Activated CD4-positive, alpha-beta T cell treated with anti-CD3 and anti-CD28 coated beads for 36 hours (primary cell): ENCODE measurements at regions of chr3 and their contacts with region 1.

Region 1: DNA sequence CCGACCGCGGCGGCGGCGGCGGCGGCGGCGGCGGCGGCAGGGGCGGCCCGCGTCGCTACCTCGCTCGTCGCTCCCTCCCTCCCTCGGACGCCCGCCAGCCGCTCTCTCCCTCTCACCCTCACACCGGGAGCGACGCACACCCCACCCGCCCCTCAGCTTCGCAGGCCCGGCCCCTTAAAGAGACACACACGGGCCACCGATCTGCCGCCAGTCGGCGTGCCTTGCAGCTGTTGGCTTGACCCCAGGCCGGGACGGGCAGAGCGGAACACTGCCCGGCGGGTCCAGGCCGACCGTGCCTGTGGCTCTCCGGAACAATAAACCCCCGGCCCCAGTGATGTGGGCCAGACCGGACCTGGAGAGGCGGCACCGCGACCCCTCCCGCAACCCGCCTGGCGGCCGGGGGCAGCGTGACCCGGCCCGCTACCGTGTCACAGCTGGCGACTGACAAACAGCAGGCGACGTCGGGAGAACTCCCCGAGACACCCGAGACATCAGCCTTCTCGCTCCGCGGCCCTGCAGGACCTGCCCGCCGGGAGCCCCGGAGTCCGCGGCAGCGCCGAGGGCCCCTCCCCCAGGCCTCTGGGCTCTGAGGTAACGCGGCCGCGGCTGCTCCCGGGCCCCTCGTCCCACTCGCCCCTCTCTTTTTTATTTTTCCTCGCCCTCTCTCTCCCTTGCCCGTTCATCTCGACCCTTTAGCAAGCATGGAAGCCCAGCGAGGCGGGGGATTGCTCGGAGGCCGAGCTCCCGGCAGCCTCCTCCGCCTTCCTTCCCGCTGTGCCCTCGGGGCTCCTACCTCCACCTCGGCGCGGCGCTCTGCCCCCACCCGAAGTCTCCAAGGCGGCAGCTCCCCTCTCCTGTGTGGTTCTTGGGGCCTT is at the start of gene SETD2:
- DNase-seq: peak; percentile 94
- ATAC-seq: peak; percentile 86
- H3K4me3 Mint-ChIP-seq: peak within 1 kb of the TSS; percentile 97
- H3K27ac Mint-ChIP-seq: peak within 1 kb of the TSS; percentile 99
- H3K4me1 Mint-ChIP-seq: peaks cover 40% of the 10 kb centered on the region
- H3K27me3 Mint-ChIP-seq: no peaks in the 10 kb centered on the region
- total RNA-seq, gene SETD2: 31.8 to 35.8 TPM

Region 2: DNA sequence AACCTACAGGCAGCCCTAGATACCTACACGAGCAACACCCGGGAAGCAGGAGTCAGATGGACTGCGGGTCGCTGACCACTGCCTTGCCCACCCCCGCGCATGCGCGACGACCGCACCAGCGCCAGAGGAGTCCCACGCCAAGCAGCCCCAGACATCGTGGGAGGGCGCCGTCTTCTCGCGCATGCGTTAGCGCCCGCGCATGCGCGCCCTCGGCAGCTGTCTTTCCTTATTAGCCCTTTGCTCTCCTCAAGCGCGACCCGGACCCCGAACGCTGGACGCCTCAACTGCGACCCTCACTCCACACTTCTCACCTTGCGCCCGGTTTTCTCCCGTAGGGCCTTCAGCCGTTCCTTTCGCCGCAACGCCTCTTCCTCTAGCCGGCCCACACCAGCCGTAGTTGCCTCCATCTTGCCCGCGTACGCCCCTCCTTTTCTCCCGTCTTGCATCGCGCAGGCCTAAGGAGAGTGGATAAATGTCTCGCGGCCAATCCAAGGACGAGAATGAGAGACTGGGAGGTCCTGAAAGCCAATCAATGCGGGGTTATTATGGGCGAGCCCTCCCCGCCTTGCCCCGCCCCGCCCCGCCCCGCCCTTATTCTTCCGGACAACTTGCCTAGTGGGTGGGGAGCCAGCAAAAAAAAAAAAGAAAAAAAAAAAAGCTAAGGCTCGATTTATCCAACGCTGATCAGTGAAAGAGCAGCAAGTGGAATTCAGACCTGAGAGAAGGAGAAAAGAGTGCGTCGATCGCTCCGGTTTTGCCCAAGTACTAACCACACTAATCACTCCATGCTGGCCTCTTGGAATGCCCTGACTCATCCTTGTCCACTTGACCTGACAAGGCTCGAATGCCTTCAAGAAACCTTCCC is 187.7 kb before region 1 on chr3 and contains the start of gene CCDC12:
- CTCF ChIA-PET with region 1: no interaction called
- POLR2A ChIA-PET with region 1: no interaction called
- intact Hi-C with region 1: loop called in 1 of 2 experiments (anchors 1 kb)
- DNase-seq: peak; percentile 96
- ATAC-seq: peak; percentile 82
- H3K4me3 Mint-ChIP-seq: peak within 1 kb of the TSS; percentile 92
- H3K27ac Mint-ChIP-seq: peak within 1 kb of the TSS; percentile 99
- H3K4me1 Mint-ChIP-seq: peaks cover 66% of the 10 kb centered on the region
- H3K27me3 Mint-ChIP-seq: no peaks in the 10 kb centered on the region
- total RNA-seq, gene CCDC12: 45.4 to 47.8 TPM

Region 3: DNA sequence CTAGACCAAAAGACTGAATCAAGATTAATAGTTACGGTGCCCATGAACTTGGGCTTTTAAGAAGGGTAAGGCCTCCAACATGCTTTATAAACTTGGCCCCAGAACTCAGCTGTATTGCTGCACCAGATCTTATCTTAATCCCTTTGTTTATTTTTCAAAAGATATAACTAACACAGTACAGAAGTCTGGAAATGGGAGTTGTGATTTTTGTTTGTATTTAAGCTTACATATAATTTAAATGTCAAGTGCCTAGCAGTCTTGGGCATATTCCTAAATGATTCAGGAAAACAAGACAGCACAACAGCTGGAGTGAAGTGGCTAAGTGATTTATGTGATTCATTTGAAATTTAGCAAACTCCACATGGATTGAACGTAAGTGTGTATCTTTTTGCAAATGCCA is 128.6 kb before region 1 on chr3:
- CTCF ChIA-PET with region 1: no interaction called
- POLR2A ChIA-PET with region 1: interaction called, 3 read pairs
- intact Hi-C with region 1: loop called in 1 of 2 experiments (anchors 5 kb)
- DNase-seq: no peak
- ATAC-seq: no peak
- H3K4me3 Mint-ChIP-seq: no peak overlapping the region
- H3K27ac Mint-ChIP-seq: no peak overlapping the region
- H3K4me1 Mint-ChIP-seq: peaks cover 41% of the 10 kb centered on the region
- H3K27me3 Mint-ChIP-seq: no peaks in the 10 kb centered on the region

Region 4: GRCh38 chr3:47113669-47114365 is 50.4 kb before region 1 on chr3:
- CTCF ChIA-PET with region 1: interaction called, 3 read pairs
- POLR2A ChIA-PET with region 1: no interaction called
- intact Hi-C with region 1: loop called in 1 of 2 experiments (anchors 5 kb)
- DNase-seq: no peak
- ATAC-seq: no peak
- H3K4me3 Mint-ChIP-seq: no peak overlapping the region
- H3K27ac Mint-ChIP-seq: no peak overlapping the region
- H3K4me1 Mint-ChIP-seq: peaks cover 14% of the 10 kb centered on the region
- H3K27me3 Mint-ChIP-seq: no peaks in the 10 kb centered on the region

Region 5: GRCh38 chr3:47193871-47194859 is 29.9 kb after region 1 on chr3:
- CTCF ChIA-PET with region 1: no interaction called
- POLR2A ChIA-PET with region 1: no interaction called
- intact Hi-C with region 1: no loop called
- DNase-seq: no peak
- ATAC-seq: no peak
- H3K4me3 Mint-ChIP-seq: no peak overlapping the region
- H3K27ac Mint-ChIP-seq: no peak overlapping the region
- H3K4me1 Mint-ChIP-seq: no peaks in the 10 kb centered on the region
- H3K27me3 Mint-ChIP-seq: no peaks in the 10 kb centered on the region

Region 6: GRCh38 chr3:47324278-47324865 is 160.1 kb after region 1 on chr3:
- CTCF ChIA-PET with region 1: interaction called, 3 read pairs
- POLR2A ChIA-PET with region 1: no interaction called
- intact Hi-C with region 1: loop called in 1 of 2 experiments (anchors 1 kb)
- DNase-seq: peak; percentile 66
- ATAC-seq: peak; percentile 88
- H3K4me3 Mint-ChIP-seq: no peak overlapping the region
- H3K27ac Mint-ChIP-seq: no peak overlapping the region
- H3K4me1 Mint-ChIP-seq: no peaks in the 10 kb centered on the region
- H3K27me3 Mint-ChIP-seq: no peaks in the 10 kb centered on the region

Region 7: DNA sequence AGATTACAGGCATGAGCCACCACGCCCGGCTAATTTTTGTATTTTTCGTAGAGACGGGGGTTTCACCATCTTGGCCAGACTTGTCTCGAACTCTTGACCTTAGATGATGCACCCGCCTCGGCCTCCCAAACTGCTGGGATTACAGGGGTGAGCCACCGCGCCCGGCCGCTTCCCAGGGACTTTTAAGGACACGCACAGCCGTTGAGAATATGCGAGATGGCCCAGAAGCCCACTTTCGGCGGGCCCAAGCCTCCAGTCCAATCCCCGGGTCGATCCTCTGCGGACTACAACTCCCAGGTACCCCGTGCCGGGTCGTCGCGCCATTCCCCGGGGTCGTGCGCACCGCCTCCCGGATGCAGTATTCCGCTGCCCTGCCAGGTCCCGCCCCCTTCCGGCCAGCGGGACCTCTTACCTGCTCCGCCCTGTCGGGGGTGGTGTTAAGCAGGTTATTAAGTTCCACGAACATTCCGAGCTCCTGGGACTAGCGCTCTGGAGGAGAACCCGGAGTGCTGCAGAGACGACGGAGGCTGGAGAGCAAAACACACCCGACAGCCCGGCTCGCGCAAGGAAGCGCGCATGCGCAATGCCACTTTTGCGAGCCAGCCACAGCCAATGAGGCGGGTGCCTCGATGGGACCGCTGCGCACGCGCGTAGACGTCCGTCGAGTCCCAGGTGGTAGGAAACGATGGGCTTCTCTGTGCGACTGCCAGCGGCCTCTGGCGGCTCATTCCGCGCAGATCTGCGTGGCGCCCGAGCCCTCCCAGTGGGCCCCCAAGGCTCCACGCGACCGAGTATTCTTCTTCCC is 349.1 kb after region 1 on chr3 and contains the start of gene ELP6:
- CTCF ChIA-PET with region 1: no interaction called
- POLR2A ChIA-PET with region 1: no interaction called
- intact Hi-C with region 1: loop called in 1 of 2 experiments (anchors 2 kb)
- DNase-seq: peak; percentile 99
- ATAC-seq: peak; percentile 97
- H3K4me3 Mint-ChIP-seq: peak within 1 kb of the TSS; percentile 91
- H3K27ac Mint-ChIP-seq: peak within 1 kb of the TSS; percentile 96
- H3K4me1 Mint-ChIP-seq: peaks cover 20% of the 10 kb centered on the region
- H3K27me3 Mint-ChIP-seq: no peaks in the 10 kb centered on the region
- total RNA-seq, gene ELP6: 27.8 to 40.3 TPM